ENCODE measurements at regions of chr3 and their contacts with region 1.

Region 1: DNA sequence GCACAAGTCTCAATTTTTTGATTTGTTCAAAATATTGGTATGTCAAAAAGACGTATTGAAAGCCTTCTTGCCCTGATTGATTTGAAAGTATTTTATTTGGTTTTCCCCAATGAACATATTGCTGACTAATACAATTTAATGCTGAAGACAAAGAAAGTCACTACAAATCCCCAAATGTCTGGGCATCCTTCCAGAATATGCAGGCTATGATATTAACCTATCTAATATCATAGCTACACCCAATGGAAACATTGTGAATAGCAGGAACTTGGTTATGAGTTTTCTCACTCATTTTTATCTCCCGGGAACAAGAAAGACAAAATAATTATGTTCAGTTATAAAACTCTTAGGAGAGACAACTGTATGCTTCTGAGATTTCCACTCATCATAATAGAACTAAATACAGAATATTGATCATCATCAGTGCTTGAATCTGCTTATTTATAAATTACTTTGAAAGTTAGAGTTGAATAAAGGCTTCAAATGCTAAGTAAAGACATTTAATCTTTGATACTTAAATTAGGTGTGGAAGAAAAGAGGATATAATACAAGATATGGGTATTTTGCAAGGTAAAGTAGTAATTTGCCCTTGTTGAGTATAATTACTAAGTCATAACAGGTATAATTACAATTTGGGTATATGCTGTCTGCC is 483.9 kb downstream of the RBMS3 start:
- DNase-seq: peak; percentile 94
- H3K4me3 Mint-ChIP-seq: no peak overlapping the region
- H3K27ac Mint-ChIP-seq: peak overlapping the region; percentile 35
- H3K4me1 Mint-ChIP-seq: peaks cover 17% of the 10 kb centered on the region
- H3K27me3 Mint-ChIP-seq: no peaks in the 10 kb centered on the region
- CTCF ChIP-seq: peak; percentile 79

Region 2: GRCh38 chr3:28853830-28854229 is 910.9 kb before region 1 on chr3:
- CTCF ChIA-PET with region 1: interaction called, 9 read pairs
- POLR2A ChIA-PET with region 1: interaction called, 5 read pairs
- intact Hi-C with region 1: loop called (anchors 1 kb)
- DNase-seq: peak; percentile 31
- H3K4me3 Mint-ChIP-seq: no peak overlapping the region
- H3K27ac Mint-ChIP-seq: no peak overlapping the region
- H3K4me1 Mint-ChIP-seq: no peaks in the 10 kb centered on the region
- H3K27me3 Mint-ChIP-seq: no peaks in the 10 kb centered on the region
- CTCF ChIP-seq: peak; percentile 20

Region 3: DNA sequence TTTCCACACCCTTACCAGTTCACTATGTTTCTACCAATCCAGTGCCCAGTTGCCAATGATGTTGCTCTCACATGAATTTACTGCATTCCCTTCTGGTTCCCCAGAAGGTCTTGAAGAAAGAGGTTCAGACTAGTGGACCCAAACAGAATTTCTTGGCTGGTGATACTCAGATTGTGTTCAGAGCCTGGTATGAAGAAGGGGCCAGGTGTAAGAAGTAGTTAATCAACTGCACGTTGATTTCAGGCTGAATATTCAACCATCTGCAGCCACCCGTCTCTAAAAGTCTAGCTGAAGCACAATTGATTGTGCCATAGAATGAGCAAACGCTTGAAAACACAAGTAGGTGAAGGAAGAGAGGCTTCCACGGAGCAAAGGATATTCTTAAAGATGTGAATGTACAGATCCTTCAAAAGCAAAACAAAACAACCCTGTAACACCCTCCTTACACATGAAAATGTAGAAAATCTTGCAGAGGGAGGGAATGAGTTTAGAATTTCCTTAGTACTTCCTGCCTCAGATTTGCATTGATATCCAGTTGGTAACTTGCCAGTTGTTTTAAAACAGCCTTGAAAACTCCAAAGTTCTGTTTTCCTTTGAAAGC is 479.2 kb before region 1 on chr3:
- CTCF ChIA-PET with region 1: interaction called, 14 read pairs
- POLR2A ChIA-PET with region 1: interaction called, 144 read pairs
- intact Hi-C with region 1: loop called (anchors 1 kb)
- DNase-seq: peak; percentile 74
- H3K4me3 Mint-ChIP-seq: peak overlapping the region; percentile 79
- H3K27ac Mint-ChIP-seq: peak overlapping the region; percentile 85
- H3K4me1 Mint-ChIP-seq: peaks cover 16% of the 10 kb centered on the region
- H3K27me3 Mint-ChIP-seq: no peaks in the 10 kb centered on the region
- CTCF ChIP-seq: no peak